Psoas muscle (tissue), 8 donors: ENCODE measurements at regions of chr9 and their contacts with region 1.

Region 1: GRCh38 chr9:4750023-4750673 is 9.1 kb upstream of the AK3 start:
- DNase-seq: no peak
- ATAC-seq: peak; percentile 20 to 62 (median 38)
- H3K4me3 ChIP-seq: no peak overlapping the region
- H3K27ac ChIP-seq: no peak overlapping the region
- H3K4me1 ChIP-seq: no peaks in the 10 kb centered on the region
- H3K27me3 ChIP-seq: no peaks in the 10 kb centered on the region
- CTCF ChIP-seq: peak; percentile 55

Region 2: GRCh38 chr9:4689687-4690104 is 60.5 kb before region 1 on chr9:
- intact Hi-C with region 1: no loop called
- DNase-seq: no peak
- ATAC-seq: peak in 1 of 4 donors; percentile 34
- H3K4me3 ChIP-seq: no peak overlapping the region
- H3K27ac ChIP-seq: peak overlapping the region; percentile 3
- H3K4me1 ChIP-seq: peaks cover 58% of the 10 kb centered on the region
- H3K27me3 ChIP-seq: no peaks in the 10 kb centered on the region
- CTCF ChIP-seq: no peak

Region 3: GRCh38 chr9:4792572-4793458 is 42.7 kb after region 1 on chr9 and contains the start of gene RCL1:
- intact Hi-C with region 1: no loop called
- DNase-seq: peak; percentile 96 to 98
- ATAC-seq: peak; percentile 94 to 98 (median 96)
- H3K4me3 ChIP-seq: peak within 1 kb of the TSS; percentile 78
- H3K27ac ChIP-seq: peak within 1 kb of the TSS; percentile 96
- H3K4me1 ChIP-seq: peaks cover 29% of the 10 kb centered on the region
- H3K27me3 ChIP-seq: no peaks in the 10 kb centered on the region
- CTCF ChIP-seq: no peak
- total RNA-seq, gene RCL1: 16.0 to 29.5 (median 17.9) TPM

Region 4: GRCh38 chr9:4886698-4887097 is 136.6 kb after region 1 on chr9:
- intact Hi-C with region 1: loop called in 1 of 2 experiments (anchors 10 kb)
- DNase-seq: no peak
- ATAC-seq: no peak
- H3K4me3 ChIP-seq: no peak overlapping the region
- H3K27ac ChIP-seq: no peak overlapping the region
- H3K4me1 ChIP-seq: peaks cover 7% of the 10 kb centered on the region
- H3K27me3 ChIP-seq: no peaks in the 10 kb centered on the region
- CTCF ChIP-seq: no peak